Activated CD4-positive, alpha-beta memory T cell treated with anti-CD3 and anti-CD28 coated beads for 36 hours (primary cell): ENCODE measurements at regions of chr7 and their contacts with region 1.

Region 1: DNA sequence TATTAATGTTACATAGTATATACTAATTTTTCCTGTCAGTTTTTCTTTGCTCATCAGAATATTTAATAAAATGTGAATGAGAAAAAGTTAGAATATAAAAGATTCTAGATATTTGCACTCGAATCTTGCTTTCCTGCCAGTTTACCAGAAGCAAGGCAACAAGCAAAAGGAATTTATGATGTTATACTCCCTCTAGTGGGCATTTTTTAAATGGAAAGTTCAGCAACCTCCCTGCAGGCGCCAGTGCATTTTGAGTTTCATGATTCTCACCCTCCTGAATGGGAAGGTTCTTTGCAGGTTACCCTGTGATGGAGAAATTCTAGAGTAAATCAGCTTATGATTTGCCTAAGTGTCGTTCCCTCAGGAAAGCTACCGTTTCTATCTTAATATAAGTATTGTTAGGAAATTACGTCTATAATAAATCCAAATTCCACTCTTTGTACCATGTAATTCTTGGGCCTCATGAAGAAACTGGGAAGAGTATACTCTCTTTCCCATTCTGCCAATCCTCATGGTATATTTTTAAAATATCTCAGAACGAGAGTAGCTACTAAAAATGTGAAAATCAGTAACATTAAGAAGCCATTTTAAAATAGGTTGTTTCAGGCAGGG is 350.0 kb downstream of the CRPPA start:
- DNase-seq: peak; percentile 14
- H3K4me3 Mint-ChIP-seq: no peak overlapping the region
- H3K27ac Mint-ChIP-seq: no peak overlapping the region
- H3K4me1 Mint-ChIP-seq: no peaks in the 10 kb centered on the region
- H3K27me3 Mint-ChIP-seq: peaks cover 2% of the 10 kb centered on the region

Region 2: GRCh38 chr7:14698239-14698638 is 1373.1 kb before region 1 on chr7:
- CTCF ChIA-PET with region 1: no interaction called
- POLR2A ChIA-PET with region 1: no interaction called
- intact Hi-C with region 1: loop called (anchors 2 kb)
- DNase-seq: no peak
- H3K4me3 Mint-ChIP-seq: no peak overlapping the region
- H3K27ac Mint-ChIP-seq: no peak overlapping the region
- H3K4me1 Mint-ChIP-seq: no peaks in the 10 kb centered on the region
- H3K27me3 Mint-ChIP-seq: no peaks in the 10 kb centered on the region

Region 3: DNA sequence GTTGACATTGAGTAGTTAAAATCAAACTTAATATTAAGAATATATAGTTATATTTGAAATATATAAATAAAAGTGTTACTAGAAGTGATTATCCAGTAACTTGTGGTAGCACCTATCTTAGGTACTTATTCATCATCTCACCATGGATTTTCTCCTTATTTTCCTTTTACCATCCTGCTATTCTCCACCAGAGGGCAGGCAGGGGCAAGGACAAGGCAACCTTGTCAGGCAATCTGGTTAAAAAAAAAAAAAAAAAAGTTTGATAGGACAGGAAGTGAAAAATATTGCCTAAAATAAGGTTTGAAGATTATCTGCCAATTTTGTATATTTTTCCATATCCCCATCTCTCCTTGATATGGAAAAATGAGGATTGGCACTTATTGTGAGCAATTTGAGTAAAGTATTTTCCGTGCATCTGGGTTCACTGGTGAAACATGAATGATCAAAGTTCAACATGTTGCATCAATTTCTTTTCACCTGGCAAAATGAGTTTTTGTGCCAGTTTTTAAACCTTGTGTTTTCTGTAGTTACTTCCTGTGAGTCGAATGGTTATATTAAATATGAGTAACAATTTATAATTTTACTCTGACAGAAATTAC is 766.3 kb before region 1 on chr7:
- CTCF ChIA-PET with region 1: interaction called, 3 read pairs
- POLR2A ChIA-PET with region 1: no interaction called
- intact Hi-C with region 1: loop called (anchors 5 kb)
- DNase-seq: no peak
- H3K4me3 Mint-ChIP-seq: no peak overlapping the region
- H3K27ac Mint-ChIP-seq: no peak overlapping the region
- H3K4me1 Mint-ChIP-seq: no peaks in the 10 kb centered on the region
- H3K27me3 Mint-ChIP-seq: no peaks in the 10 kb centered on the region

Region 4: DNA sequence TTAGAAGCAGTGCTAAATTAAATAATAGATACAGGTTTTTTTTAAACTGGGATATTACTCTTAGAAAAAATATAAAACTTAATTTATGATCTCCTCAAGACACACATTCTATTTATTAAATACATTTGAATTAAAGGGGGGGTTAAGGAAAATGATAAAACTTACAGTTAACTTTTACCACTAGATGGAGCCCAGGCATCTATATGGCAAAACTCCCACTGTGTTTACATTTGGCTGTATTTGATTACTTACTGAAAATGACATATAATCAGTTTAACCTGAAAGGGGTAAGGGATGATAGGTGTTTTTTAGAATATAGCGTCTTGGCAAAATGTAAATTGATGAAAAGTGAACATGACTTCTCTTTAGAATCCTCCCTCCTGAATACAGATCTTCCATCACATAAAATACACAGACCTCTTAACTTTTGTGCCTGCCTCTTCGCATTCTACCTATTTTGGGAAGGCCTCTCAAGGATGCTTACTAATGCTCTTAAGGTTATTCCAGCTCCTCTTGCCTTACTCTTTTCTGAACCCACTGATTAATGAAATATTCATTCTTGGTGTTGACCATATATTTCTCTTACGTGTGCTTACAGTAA is 745.2 kb before region 1 on chr7:
- CTCF ChIA-PET with region 1: no interaction called
- POLR2A ChIA-PET with region 1: no interaction called
- intact Hi-C with region 1: loop called (anchors 1 kb)
- DNase-seq: no peak
- H3K4me3 Mint-ChIP-seq: no peak overlapping the region
- H3K27ac Mint-ChIP-seq: no peak overlapping the region
- H3K4me1 Mint-ChIP-seq: no peaks in the 10 kb centered on the region
- H3K27me3 Mint-ChIP-seq: no peaks in the 10 kb centered on the region

Region 5: DNA sequence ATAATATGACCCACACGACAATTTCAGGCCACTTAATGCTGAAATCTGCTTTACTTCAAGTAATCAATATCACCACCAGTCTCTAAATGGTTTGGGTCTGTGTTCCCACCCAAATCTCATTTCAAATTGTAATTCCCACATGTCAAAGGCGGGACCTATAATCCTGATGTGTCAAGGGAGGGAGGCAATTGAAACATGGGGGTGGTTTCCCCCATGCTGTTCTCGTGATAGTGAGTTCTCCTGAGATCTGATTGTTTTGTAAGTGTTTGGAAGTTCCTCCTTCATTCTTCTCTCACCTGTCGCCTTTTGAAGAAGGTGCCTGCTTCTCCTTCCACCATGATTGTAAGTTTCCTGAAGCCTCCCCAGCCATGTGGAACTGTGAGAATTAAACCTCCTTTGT is 171.6 kb after region 1 on chr7:
- CTCF ChIA-PET with region 1: no interaction called
- POLR2A ChIA-PET with region 1: no interaction called
- intact Hi-C with region 1: no loop called
- DNase-seq: no peak
- H3K4me3 Mint-ChIP-seq: no peak overlapping the region
- H3K27ac Mint-ChIP-seq: no peak overlapping the region
- H3K4me1 Mint-ChIP-seq: no peaks in the 10 kb centered on the region
- H3K27me3 Mint-ChIP-seq: no peaks in the 10 kb centered on the region

Region 6: GRCh38 chr7:16420649-16421332 is 349.4 kb after region 1 on chr7:
- CTCF ChIA-PET with region 1: no interaction called
- POLR2A ChIA-PET with region 1: no interaction called
- intact Hi-C with region 1: loop called (anchors 10 kb)
- DNase-seq: peak; percentile 89
- H3K4me3 Mint-ChIP-seq: peak overlapping the region; percentile 89
- H3K27ac Mint-ChIP-seq: peak overlapping the region; percentile 96
- H3K4me1 Mint-ChIP-seq: peaks cover 17% of the 10 kb centered on the region
- H3K27me3 Mint-ChIP-seq: peaks cover 3% of the 10 kb centered on the region